ENCODE measurements at regions of chrX and their contacts with region 1.

Region 1: DNA sequence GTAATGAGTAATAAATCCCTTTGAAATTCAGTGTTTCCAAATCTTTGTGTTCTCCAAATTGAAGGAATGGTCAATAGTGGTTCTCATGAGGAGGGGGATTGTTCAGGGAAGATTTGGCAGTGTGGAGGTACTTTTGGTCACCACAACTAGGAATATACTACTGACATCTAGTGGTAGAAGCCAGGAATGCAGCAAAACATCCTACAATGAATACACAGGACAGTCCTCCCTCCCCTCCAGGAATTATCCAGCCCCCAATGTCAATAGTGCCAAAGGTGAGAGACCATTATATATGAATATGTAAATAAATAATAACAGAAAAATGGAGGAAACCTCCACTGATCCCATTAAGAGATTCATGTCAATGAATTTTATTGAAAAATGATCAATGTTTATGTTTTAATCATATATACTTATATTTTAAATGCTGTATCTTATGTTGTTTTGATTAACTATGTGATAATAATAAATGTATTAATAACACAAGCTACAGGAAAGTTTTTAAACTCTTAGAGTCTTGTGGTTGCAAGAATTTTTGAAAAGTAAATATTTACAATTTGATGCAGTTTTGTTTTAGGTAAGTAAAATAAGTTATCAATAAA is 14.4 kb upstream of the FAM9A start:
- DNase-seq: peak in 3 of 9 experiments; percentile 25 to 57 (median 48)
- ATAC-seq: peak; percentile 31
- H3K4me3 ChIP-seq: no peak overlapping the region
- H3K4me3 Mint-ChIP-seq: no peak overlapping the region
- H3K27ac ChIP-seq: no peak overlapping the region
- H3K27ac Mint-ChIP-seq: no peak overlapping the region
- H3K4me1 ChIP-seq: no peaks in the 10 kb centered on the region
- H3K4me1 Mint-ChIP-seq: no peaks in the 10 kb centered on the region
- H3K27me3 ChIP-seq: no peaks in the 10 kb centered on the region
- H3K27me3 Mint-ChIP-seq: peaks cover 3% of the 10 kb centered on the region
- CTCF ChIP-seq: peak; percentile 75

Region 2: GRCh38 chrX:8748855-8749254 is 66.7 kb before region 1 on chrX:
- CTCF ChIA-PET with region 1: interaction called, 7 read pairs
- POLR2A ChIA-PET with region 1: no interaction called
- intact Hi-C with region 1: loop called (anchors 1 to 5 kb)
- DNase-seq: peak in 2 of 9 experiments; percentile 30 to 46
- ATAC-seq: no peak
- H3K4me3 ChIP-seq: no peak overlapping the region
- H3K4me3 Mint-ChIP-seq: no peak overlapping the region
- H3K27ac ChIP-seq: no peak overlapping the region
- H3K27ac Mint-ChIP-seq: no peak overlapping the region
- H3K4me1 ChIP-seq: no peaks in the 10 kb centered on the region
- H3K4me1 Mint-ChIP-seq: peaks cover 3% of the 10 kb centered on the region
- H3K27me3 ChIP-seq: no peaks in the 10 kb centered on the region
- H3K27me3 Mint-ChIP-seq: peaks cover 7% of the 10 kb centered on the region
- CTCF ChIP-seq: peak; percentile 49

Region 3: DNA sequence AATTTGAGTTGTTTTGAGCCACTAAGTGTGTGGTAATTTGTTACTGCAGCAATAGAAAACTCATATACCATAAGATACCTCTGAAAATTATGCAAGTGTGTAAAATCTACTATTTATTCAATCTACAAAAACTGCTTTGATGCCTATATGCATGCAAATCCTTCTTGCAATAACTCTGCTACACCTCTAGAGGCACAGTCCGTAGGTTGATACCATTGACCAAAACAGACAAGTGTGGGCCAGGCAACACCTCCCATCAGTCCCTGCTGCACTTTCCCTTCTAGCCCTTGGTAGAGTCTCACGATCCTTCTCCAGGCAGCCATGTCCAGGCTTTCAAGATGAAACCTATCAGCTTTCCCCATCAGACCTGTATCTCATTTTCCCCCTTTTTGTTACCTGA is 34.4 kb after region 1 on chrX:
- CTCF ChIA-PET with region 1: no interaction called
- POLR2A ChIA-PET with region 1: no interaction called
- intact Hi-C with region 1: no loop called
- DNase-seq: no peak
- ATAC-seq: no peak
- H3K4me3 ChIP-seq: no peak overlapping the region
- H3K4me3 Mint-ChIP-seq: no peak overlapping the region
- H3K27ac ChIP-seq: no peak overlapping the region
- H3K27ac Mint-ChIP-seq: no peak overlapping the region
- H3K4me1 ChIP-seq: no peaks in the 10 kb centered on the region
- H3K4me1 Mint-ChIP-seq: no peaks in the 10 kb centered on the region
- H3K27me3 ChIP-seq: no peaks in the 10 kb centered on the region
- H3K27me3 Mint-ChIP-seq: peaks cover 21% of the 10 kb centered on the region
- CTCF ChIP-seq: no peak

Region 4: GRCh38 chrX:9447906-9448305 is 632.3 kb after region 1 on chrX:
- CTCF ChIA-PET with region 1: no interaction called
- POLR2A ChIA-PET with region 1: no interaction called
- intact Hi-C with region 1: no loop called
- DNase-seq: no peak
- ATAC-seq: no peak
- H3K4me3 ChIP-seq: no peak overlapping the region
- H3K4me3 Mint-ChIP-seq: no peak overlapping the region
- H3K27ac ChIP-seq: no peak overlapping the region
- H3K27ac Mint-ChIP-seq: no peak overlapping the region
- H3K4me1 ChIP-seq: no peaks in the 10 kb centered on the region
- H3K4me1 Mint-ChIP-seq: no peaks in the 10 kb centered on the region
- H3K27me3 ChIP-seq: no peaks in the 10 kb centered on the region
- H3K27me3 Mint-ChIP-seq: no peaks in the 10 kb centered on the region
- CTCF ChIP-seq: no peak

Measured in CD8-positive, alpha-beta T cell (primary cell).